WTC11 (cell line): ENCODE measurements at regions of chr13 and their contacts with region 1.

Region 1: GRCh38 chr13:27826379-27827353 is 34.4 kb downstream of the GSX1 start:
- DNase-seq: peak; percentile 96
- ATAC-seq: peak; percentile 80
- H3K4me3 Mint-ChIP-seq: peak overlapping the region; percentile 59
- H3K27ac Mint-ChIP-seq: no peak overlapping the region
- H3K4me1 Mint-ChIP-seq: peaks cover 27% of the 10 kb centered on the region
- H3K27me3 Mint-ChIP-seq: peaks cover 100% of the 10 kb centered on the region
- CTCF ChIP-seq: peak; percentile 92

Region 2: DNA sequence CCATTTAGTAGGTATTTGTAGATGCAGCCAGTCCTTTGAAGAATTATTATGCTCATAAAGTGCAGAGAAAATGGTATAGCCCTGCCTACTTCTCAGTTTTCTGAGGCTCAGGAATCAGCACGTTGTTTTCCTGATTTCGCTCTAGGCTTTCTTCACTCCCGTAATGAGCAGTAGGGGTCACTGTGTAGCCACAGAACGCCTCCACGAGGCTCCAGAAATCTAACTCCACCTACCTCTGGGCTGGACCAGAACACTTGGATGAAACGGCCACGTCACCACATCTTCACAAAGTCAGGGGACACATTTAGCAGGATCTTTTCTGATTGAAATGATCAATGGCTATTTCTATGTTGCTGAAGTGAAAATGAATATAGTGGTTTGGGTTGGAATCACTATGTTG is 452.0 kb before region 1 on chr13:
- CTCF ChIA-PET with region 1: interaction called, 21 read pairs
- POLR2A ChIA-PET with region 1: no interaction called
- DNase-seq: peak; percentile 66
- ATAC-seq: peak; percentile 88
- H3K4me3 Mint-ChIP-seq: no peak overlapping the region
- H3K27ac Mint-ChIP-seq: no peak overlapping the region
- H3K4me1 Mint-ChIP-seq: peaks cover 22% of the 10 kb centered on the region
- H3K27me3 Mint-ChIP-seq: peaks cover 15% of the 10 kb centered on the region
- CTCF ChIP-seq: peak; percentile 24; the same call in 1 of the 2 replicates

Region 3: GRCh38 chr13:27665333-27665732 is 161.3 kb before region 1 on chr13:
- CTCF ChIA-PET with region 1: interaction called, 36 read pairs
- POLR2A ChIA-PET with region 1: no interaction called
- DNase-seq: no peak
- ATAC-seq: no peak
- H3K4me3 Mint-ChIP-seq: no peak overlapping the region
- H3K27ac Mint-ChIP-seq: peak overlapping the region; percentile 49; the same call in 1 of the 2 replicates
- H3K4me1 Mint-ChIP-seq: peaks cover 12% of the 10 kb centered on the region
- H3K27me3 Mint-ChIP-seq: no peaks in the 10 kb centered on the region
- CTCF ChIP-seq: no peak

Region 4: DNA sequence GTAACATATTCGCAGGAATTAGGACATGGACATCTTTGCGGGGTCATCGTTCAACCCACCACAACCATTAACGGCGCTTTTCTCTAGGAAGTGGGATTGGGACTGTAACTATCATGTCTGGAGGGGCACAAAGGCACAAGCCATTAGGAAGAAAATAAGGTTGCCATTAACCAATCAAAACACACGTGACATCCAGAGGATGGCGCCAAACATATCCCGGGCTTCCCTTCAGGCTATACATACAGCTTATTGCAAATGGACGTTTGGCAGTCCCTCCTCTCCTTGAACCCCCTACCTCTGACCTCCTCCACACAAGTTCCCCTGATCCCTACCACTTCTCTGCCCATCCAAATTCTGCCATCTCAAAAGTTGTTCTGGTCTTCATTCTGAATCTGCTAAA is 61.0 kb before region 1 on chr13:
- CTCF ChIA-PET with region 1: interaction called, 112 read pairs
- POLR2A ChIA-PET with region 1: no interaction called
- DNase-seq: no peak
- ATAC-seq: peak; percentile 34; the same call in 1 of the 2 replicates
- H3K4me3 Mint-ChIP-seq: no peak overlapping the region
- H3K27ac Mint-ChIP-seq: no peak overlapping the region
- H3K4me1 Mint-ChIP-seq: no peaks in the 10 kb centered on the region
- H3K27me3 Mint-ChIP-seq: peaks cover 14% of the 10 kb centered on the region
- CTCF ChIP-seq: no peak

Region 5: DNA sequence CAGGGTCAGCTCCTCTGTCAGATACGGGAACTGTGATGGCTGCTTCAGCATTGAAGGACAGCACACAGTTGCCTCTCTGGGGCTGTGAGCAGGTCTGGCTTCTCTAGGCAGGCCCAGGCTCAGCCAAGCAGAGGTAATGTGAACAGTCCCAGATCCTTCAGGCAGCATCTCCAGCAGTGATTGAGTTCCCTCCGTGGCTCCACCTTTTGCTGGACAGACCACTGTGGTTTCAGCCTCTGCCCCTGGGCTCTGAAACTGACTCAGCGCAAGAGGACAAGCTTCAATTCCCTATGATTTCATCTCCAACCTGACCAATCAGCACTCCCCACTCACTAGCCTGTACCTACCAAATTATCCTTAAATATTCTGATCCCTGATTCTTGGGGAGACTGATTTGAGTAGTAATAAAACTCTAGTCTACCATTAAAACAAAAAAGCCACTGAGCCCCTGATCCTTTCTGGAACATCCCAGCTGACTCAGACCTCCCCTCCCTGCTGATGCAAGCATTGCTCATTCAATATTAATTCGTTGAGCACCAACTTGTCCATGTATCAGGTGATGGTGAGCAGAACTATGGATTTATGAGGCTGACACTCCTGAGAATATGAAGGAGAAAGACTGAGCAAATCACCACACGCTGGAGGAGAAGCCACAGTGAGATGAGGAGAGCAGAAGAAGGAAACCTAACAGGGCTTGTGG is 17.7 kb before region 1 on chr13:
- CTCF ChIA-PET with region 1: interaction called, 71 read pairs
- POLR2A ChIA-PET with region 1: no interaction called
- DNase-seq: no peak
- ATAC-seq: no peak
- H3K4me3 Mint-ChIP-seq: no peak overlapping the region
- H3K27ac Mint-ChIP-seq: no peak overlapping the region
- H3K4me1 Mint-ChIP-seq: peaks cover 23% of the 10 kb centered on the region
- H3K27me3 Mint-ChIP-seq: peaks cover 77% of the 10 kb centered on the region
- CTCF ChIP-seq: no peak

Region 6: DNA sequence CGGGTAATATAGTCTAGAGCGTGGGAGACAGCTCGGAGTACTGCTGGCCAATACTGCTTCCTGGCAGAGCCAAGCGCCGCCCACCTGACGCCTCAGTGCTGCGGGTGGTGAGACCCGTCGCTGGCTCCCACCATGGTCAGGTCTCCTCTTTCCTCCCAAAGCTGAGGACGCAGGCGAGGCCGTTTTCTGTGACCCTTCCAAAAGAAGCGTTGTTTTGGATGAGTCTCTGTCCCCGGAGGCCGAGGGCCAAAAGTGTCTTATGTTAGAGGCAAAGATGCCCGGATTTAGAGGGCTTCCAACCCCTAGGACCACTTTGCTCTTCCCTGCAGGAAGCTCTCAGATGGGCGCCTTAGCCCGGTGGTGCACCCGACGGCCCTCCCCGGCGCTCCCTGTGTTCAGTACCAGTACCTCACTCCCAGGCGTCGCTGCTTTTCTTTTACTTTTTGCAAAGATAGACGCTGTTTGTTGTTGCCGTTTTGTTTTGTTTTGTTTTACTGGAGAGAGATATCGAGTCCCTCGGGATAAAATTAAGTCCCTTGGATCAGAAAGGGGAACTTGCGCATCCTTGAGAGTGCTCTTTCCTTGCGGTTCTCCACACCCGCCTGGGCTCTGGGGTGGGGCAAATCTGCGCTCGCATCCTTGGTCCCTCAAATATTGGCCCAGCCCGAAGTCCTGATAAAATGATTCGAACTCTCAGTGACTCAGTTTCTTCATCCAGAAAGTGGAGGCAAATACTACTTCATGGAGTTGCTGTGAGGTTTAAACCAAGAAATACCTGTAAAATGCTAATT is 100.2 kb after region 1 on chr13:
- CTCF ChIA-PET with region 1: interaction called, 23 read pairs
- POLR2A ChIA-PET with region 1: interaction called, 3 read pairs
- DNase-seq: peak; percentile 47
- ATAC-seq: no peak
- H3K4me3 Mint-ChIP-seq: no peak overlapping the region
- H3K27ac Mint-ChIP-seq: no peak overlapping the region
- H3K4me1 Mint-ChIP-seq: peaks cover 52% of the 10 kb centered on the region
- H3K27me3 Mint-ChIP-seq: peaks cover 100% of the 10 kb centered on the region
- CTCF ChIP-seq: no peak

Region 7: GRCh38 chr13:27977476-27978300 is 151.0 kb after region 1 on chr13:
- CTCF ChIA-PET with region 1: interaction called, 134 read pairs
- POLR2A ChIA-PET with region 1: no interaction called
- DNase-seq: peak; percentile 69
- ATAC-seq: peak; percentile 31
- H3K4me3 Mint-ChIP-seq: peak overlapping the region; percentile 61
- H3K27ac Mint-ChIP-seq: no peak overlapping the region
- H3K4me1 Mint-ChIP-seq: peaks cover 46% of the 10 kb centered on the region
- H3K27me3 Mint-ChIP-seq: peaks cover 100% of the 10 kb centered on the region
- CTCF ChIP-seq: no peak

Region 8: DNA sequence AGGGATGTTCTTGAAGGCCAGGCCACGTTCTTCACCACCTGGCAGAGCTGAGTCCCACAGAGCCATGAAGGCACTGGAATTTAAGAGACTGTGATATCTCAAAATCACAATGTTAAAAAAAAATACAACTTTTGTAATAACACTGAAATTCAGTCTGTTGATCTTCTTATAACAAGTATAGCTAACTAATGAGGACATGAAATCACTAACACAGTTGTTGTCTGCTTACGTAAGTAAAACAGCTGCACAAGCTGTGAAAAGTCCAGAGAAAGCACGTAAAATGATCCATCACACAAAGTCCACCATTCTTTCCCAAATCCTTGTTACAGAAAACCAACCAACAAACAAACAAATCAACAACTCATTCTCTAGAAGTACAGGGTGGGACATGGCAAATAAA is 240.8 kb after region 1 on chr13:
- CTCF ChIA-PET with region 1: no interaction called
- POLR2A ChIA-PET with region 1: no interaction called
- DNase-seq: no peak
- ATAC-seq: no peak
- H3K4me3 Mint-ChIP-seq: no peak overlapping the region
- H3K27ac Mint-ChIP-seq: no peak overlapping the region
- H3K4me1 Mint-ChIP-seq: no peaks in the 10 kb centered on the region
- H3K27me3 Mint-ChIP-seq: no peaks in the 10 kb centered on the region
- CTCF ChIP-seq: no peak

Region 9: DNA sequence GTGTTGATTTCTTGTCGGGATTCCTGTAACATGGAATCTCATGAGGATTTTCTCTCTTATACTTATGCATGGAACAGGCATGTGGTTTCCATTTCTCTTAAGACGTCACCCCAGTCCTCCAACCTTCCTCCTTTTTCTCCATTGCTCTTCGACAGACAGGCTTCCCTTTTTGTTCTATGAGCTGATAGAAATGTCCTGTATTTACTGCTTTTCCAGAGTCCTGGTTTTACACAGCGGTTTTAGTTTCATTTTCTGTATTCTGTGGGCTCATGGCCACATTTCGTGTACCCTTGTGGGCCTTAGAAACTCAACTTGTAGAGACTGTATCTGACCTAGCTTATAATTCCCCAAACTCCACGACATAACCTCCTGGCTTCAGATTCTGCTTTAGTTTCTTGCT is 424.8 kb after region 1 on chr13:
- CTCF ChIA-PET with region 1: no interaction called
- POLR2A ChIA-PET with region 1: no interaction called
- DNase-seq: no peak
- ATAC-seq: no peak
- H3K4me3 Mint-ChIP-seq: no peak overlapping the region
- H3K27ac Mint-ChIP-seq: no peak overlapping the region
- H3K4me1 Mint-ChIP-seq: peaks cover 30% of the 10 kb centered on the region
- H3K27me3 Mint-ChIP-seq: no peaks in the 10 kb centered on the region
- CTCF ChIP-seq: no peak